Activated CD4-positive, alpha-beta T cell treated with anti-CD3 and anti-CD28 coated beads, Interleukin-2, amount 10 ng/mL, durations not matched to agents 24 days and 14 days (primary cell): ENCODE measurements at regions of chr7 and their contacts with region 1.

Region 1: DNA sequence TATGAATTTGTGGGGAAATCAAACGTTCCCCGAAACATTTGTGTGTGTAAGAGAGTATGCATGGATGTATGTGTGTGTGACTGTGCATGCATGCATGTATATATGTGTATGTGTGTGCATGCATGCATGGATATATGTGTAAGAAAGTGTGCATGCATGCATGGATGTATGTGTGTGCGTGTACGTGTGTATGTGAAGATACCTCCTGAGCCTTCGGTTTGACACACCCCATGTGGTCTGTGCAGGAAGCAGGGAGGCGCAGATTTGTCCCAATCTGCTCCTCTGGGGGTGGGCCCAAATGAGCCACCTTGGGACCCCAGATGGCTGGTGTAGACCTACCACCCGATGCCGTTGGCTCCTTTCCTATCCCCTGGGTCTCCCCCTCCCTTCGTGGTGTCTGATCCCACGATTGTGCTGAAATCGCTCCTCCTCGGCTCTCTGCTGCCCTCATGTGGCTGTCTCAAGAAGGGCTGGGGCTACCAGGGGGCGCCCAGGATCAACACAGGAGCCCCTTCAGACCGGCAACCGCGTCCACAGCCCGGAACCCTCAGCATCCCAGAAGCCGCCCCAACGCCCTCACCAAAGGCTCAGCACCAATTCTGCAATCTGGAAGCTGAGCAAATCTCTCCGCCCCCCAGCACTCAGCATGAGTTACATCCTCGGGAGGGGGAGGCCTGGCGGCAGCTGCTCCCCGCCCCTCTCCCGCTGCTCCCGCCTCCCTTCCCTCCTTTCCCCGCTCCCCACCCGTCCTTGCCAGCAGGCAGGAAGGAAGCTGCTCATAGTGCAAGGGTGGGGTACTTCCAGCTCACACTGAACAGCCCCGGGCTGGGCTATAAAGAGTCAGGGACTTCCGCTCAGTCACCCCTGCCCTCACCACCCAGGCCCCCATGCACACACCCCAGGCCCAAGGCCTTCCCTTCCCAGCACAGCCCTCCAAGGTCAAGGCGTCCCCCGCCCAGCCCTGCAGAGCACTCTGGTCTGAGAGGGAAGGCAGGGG is 2.3 kb upstream of the NOS3 start:
- DNase-seq: peak; percentile 91
- H3K4me3 Mint-ChIP-seq: peak overlapping the region; percentile 67
- H3K27ac Mint-ChIP-seq: peak overlapping the region; percentile 40
- H3K4me1 Mint-ChIP-seq: peaks cover 21% of the 10 kb centered on the region
- H3K27me3 Mint-ChIP-seq: peaks cover 16% of the 10 kb centered on the region

Region 2: GRCh38 chr7:150356265-150356897 is 632.1 kb before region 1 on chr7:
- intact Hi-C with region 1: loop called (anchors 10 kb)
- DNase-seq: peak; percentile 79
- H3K4me3 Mint-ChIP-seq: no peak overlapping the region
- H3K27ac Mint-ChIP-seq: peak overlapping the region; percentile 41
- H3K4me1 Mint-ChIP-seq: peaks cover 39% of the 10 kb centered on the region
- H3K27me3 Mint-ChIP-seq: peaks cover 3% of the 10 kb centered on the region

Region 3: DNA sequence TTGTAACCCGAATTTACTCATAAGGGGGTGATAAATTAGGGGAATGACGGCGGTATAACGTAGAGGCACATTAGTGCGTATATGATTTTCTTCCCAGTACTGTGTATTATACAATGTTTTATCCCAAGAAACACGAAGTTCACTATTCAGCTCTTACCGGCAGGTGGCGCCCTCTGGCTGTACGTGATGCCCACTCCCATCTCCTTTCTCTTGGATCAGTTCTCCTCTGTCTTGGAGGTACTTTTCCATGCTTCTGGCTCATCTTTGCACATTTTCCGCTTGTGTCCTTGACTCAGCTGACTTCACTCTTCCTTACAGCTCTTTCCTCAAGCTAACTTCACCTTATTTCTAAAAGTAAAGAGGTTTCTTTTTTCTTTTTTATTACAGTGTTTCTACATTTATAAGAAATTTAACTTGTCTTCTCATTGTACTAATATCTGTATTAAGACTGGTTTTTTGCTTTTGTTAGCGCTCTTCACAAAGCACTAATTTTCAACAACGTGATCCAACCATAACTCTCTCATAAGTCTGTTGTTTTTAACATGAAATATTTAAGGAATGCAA is 209.7 kb before region 1 on chr7:
- intact Hi-C with region 1: loop called (anchors 5 kb)
- DNase-seq: peak; percentile 91
- H3K4me3 Mint-ChIP-seq: no peak overlapping the region
- H3K27ac Mint-ChIP-seq: no peak overlapping the region
- H3K4me1 Mint-ChIP-seq: no peaks in the 10 kb centered on the region
- H3K27me3 Mint-ChIP-seq: peaks cover 32% of the 10 kb centered on the region

Region 4: DNA sequence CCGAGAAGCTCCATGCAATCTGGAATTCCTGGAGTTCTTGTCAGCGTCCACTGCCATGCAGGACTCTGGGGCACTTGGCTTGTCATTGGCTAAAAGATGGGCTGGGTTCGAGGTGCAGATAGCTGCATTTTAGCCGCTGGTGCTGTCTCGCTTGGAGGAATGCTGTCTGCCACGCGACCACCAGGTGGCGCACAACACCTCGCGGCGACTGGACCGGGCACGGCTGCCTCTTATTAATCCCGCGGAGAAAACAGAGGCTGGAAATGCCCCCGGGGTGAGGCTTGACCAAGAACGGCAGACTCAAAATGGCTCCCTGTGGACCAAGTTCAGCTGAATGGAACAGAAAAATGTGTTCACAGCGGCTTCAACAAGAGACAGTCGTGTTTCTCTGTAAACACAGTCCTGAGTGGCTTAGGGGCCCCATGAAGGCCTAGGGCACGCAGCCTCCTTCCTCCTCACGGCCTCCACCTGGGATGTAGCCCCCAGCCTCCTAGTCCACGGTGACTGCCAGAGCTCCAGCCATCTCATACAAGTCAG is 90.0 kb before region 1 on chr7:
- intact Hi-C with region 1: loop called (anchors 1 kb)
- DNase-seq: peak; percentile 93
- H3K4me3 Mint-ChIP-seq: no peak overlapping the region
- H3K27ac Mint-ChIP-seq: no peak overlapping the region
- H3K4me1 Mint-ChIP-seq: peaks cover 4% of the 10 kb centered on the region
- H3K27me3 Mint-ChIP-seq: peaks cover 56% of the 10 kb centered on the region

Region 5: GRCh38 chr7:150962553-150963399 is 25.8 kb before region 1 on chr7:
- intact Hi-C with region 1: loop called (anchors 1 kb)
- DNase-seq: peak; percentile 89
- H3K4me3 Mint-ChIP-seq: no peak overlapping the region
- H3K27ac Mint-ChIP-seq: no peak overlapping the region
- H3K4me1 Mint-ChIP-seq: peaks cover 5% of the 10 kb centered on the region
- H3K27me3 Mint-ChIP-seq: peaks cover 42% of the 10 kb centered on the region

Region 6: GRCh38 chr7:150974468-150975391 is 13.8 kb before region 1 on chr7:
- intact Hi-C with region 1: loop called (anchors 1 kb)
- DNase-seq: peak; percentile 93
- H3K4me3 Mint-ChIP-seq: peak overlapping the region; percentile 85
- H3K27ac Mint-ChIP-seq: peak overlapping the region; percentile 63
- H3K4me1 Mint-ChIP-seq: peaks cover 24% of the 10 kb centered on the region
- H3K27me3 Mint-ChIP-seq: peaks cover 29% of the 10 kb centered on the region